IMR-90 (cell line): ENCODE measurements at regions of chr16 and their contacts with region 1.

Region 1: DNA sequence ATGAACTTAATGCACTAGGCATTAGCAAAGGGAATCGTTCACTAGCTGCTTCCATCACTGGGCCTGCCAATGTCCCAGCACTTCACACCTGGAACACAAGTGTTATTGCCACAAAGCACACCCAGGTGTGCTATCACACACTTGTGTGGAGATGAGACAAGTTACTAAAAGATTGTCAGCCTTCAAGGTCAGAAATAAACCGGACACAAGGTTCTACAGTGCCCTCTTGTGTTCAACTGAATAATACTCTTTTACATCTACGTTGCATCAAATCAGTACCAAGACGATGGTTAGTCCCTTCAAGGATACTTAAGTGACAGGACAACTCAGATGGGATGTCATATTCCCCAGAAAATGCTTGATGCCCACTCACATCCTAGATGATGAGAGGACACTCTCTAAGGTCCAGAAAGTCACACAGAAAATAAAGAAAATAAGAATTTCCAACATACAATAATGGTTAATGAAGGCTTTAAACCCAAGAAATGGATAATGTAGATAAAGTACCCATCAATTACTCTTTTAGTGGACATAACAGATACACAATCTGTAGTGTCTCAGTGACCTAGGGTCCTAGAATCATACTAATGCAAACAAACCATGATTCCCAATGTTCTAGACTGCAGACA is 16.4 kb upstream of the GLG1 start:
- DNase-seq: peak; percentile 68
- ATAC-seq: peak; percentile 56
- H3K4me3 ChIP-seq: no peak overlapping the region
- H3K27ac ChIP-seq: no peak overlapping the region
- H3K4me1 ChIP-seq: peaks cover 4% of the 10 kb centered on the region
- H3K27me3 ChIP-seq: no peaks in the 10 kb centered on the region
- CTCF ChIP-seq: peak; percentile 67
- POLR2A ChIP-seq: no peak
- RAD21 ChIP-seq: peak; percentile 78

Region 2: DNA sequence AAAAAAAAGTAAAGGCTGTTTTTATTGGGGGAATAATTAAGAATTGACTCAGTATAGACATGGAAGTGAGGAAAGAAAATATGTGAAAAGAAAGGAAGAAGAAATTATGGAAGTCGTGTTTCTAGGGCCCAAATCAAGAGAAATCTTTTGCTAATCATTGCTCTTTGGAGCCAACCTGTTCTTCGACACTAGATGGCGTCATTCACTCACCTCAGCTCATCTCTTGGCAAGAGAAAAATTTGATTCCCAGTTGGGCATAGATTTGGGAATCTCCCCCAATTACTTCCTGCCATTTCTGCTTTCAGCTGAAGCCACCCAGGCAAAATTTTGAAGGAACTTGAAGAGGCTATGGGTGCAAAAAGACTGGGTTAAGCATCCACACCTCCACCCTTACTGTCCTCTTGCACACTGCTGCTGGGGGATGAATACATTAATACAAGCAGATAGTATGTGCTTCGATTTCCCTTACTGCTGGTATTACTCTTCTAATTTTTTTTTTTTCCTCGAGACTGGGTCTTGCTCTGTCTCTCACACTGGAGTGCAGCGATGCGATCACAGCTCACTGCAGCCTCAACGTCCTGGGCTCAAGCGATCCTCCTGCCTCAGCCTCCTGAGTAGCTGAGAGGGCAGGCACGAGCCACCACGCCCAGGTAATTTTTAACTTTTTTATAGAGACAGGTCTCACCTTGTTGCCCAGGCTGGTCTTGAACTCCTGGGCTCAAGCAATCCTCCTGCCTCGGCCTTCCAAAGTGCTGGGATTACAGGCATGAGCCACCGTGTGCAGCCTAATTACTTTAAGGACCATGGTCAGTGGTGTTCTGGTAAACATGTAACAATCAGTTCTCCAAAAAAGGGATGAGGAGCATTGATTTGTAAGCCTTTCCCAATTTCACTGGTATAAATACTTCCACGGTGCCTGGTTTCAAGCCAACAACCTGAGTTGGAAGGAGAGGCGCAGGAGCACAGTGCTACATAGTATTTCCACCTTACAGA is 313.2 kb before region 1 on chr16:
- CTCF ChIA-PET with region 1: no interaction called
- POLR2A ChIA-PET with region 1: no interaction called
- dilution Hi-C with region 1: no loop called
- in situ Hi-C with region 1: no loop called
- intact Hi-C with region 1: loop called (anchors 5 kb)
- DNase-seq: peak; percentile 56
- ATAC-seq: peak; percentile 66
- H3K4me3 ChIP-seq: no peak overlapping the region
- H3K27ac ChIP-seq: no peak overlapping the region
- H3K4me1 ChIP-seq: no peaks in the 10 kb centered on the region
- H3K27me3 ChIP-seq: no peaks in the 10 kb centered on the region
- CTCF ChIP-seq: peak; percentile 73
- POLR2A ChIP-seq: no peak
- RAD21 ChIP-seq: peak; percentile 74

Region 3: DNA sequence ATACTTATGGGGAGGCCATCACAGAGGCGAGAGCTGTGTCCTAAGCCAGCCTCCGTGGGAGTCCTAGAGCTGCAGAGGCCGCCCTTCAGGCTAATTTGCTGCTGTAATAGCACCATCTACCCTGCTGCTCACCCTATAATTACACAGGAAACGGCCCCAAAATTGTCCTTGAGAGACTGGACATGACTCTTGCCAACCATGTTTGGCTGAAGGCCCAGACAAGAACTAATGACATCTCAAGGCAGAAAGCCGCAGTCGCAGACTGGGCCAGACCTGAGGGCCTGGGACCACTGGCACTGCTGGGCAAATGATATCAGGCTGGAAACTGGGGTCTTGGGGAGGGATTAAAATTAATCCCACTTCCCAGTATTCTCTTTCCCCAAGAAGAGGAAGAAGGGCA is 302.6 kb before region 1 on chr16:
- CTCF ChIA-PET with region 1: no interaction called
- POLR2A ChIA-PET with region 1: no interaction called
- dilution Hi-C with region 1: no loop called
- in situ Hi-C with region 1: loop called (anchors 10 kb)
- intact Hi-C with region 1: no loop called
- DNase-seq: no peak
- ATAC-seq: no peak
- H3K4me3 ChIP-seq: no peak overlapping the region
- H3K27ac ChIP-seq: no peak overlapping the region
- H3K4me1 ChIP-seq: 0 out of 2 replicates have a peak, but pooled peaks cover 1% of the 10 kb centered on the region
- H3K27me3 ChIP-seq: no peaks in the 10 kb centered on the region
- CTCF ChIP-seq: no peak
- POLR2A ChIP-seq: no peak
- RAD21 ChIP-seq: no peak

Region 4: GRCh38 chr16:74480141-74481029 is 142.9 kb before region 1 on chr16:
- CTCF ChIA-PET with region 1: interaction called, 3 read pairs
- POLR2A ChIA-PET with region 1: no interaction called
- dilution Hi-C with region 1: no loop called
- in situ Hi-C with region 1: loop called (anchors 10 kb)
- intact Hi-C with region 1: no loop called
- DNase-seq: no peak
- ATAC-seq: peak; percentile 54; the same call in 1 of the 2 replicates
- H3K4me3 ChIP-seq: no peak overlapping the region
- H3K27ac ChIP-seq: no peak overlapping the region
- H3K4me1 ChIP-seq: no peaks in the 10 kb centered on the region
- H3K27me3 ChIP-seq: no peaks in the 10 kb centered on the region
- CTCF ChIP-seq: no peak
- POLR2A ChIP-seq: no peak
- RAD21 ChIP-seq: no peak

Region 5: DNA sequence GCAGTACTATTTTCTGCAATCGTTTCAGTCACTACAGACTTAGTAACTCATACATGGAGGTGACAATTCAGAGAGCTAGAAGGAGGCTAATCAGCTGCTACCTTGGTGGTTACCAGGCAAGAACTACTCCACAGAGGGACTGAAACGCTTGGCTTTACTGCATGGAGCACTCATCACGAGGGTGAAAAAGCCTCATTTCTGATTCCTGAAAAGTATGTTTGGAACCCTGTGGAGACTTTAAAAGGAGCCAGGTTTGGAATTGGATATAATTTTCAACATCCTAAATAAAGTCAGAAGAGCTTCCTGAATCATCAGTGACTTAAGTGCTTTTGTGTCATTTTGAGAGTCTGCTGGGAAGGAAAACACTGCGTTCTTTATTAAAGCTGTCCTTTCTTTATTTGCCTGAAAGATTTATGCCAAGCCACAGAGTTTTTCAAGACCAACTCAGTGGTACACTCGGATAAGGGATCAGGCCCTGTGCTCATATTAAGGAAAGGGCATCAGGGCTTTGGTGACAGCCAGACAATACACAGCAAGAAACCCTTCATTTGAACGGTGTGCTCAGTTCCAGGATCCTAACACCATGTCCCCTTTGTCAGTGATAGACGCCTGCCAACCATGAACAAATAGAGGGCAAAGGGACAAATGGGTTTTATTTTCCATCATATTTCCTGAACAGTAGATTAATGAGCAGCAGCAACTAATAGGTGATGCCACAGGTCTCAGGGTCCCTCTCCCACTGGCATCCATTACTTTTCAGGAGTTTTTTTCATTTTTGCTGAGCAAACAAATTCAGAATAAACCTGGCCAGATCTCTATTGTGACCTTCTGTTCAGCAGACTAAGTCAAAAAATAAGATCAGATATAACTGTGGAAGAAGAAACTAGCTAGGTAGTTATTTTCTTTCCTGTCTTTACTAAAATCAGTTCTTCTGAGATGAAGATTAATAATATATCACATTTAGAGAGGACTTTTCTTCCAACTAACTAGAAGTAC is 121.5 kb before region 1 on chr16:
- CTCF ChIA-PET with region 1: no interaction called
- POLR2A ChIA-PET with region 1: no interaction called
- dilution Hi-C with region 1: no loop called
- in situ Hi-C with region 1: no loop called
- intact Hi-C with region 1: loop called (anchors 5 kb)
- DNase-seq: no peak
- ATAC-seq: no peak
- H3K4me3 ChIP-seq: no peak overlapping the region
- H3K27ac ChIP-seq: no peak overlapping the region
- H3K4me1 ChIP-seq: no peaks in the 10 kb centered on the region; the same call in 1 of the 2 replicates
- H3K27me3 ChIP-seq: no peaks in the 10 kb centered on the region
- CTCF ChIP-seq: no peak
- POLR2A ChIP-seq: no peak
- RAD21 ChIP-seq: no peak

Region 6: DNA sequence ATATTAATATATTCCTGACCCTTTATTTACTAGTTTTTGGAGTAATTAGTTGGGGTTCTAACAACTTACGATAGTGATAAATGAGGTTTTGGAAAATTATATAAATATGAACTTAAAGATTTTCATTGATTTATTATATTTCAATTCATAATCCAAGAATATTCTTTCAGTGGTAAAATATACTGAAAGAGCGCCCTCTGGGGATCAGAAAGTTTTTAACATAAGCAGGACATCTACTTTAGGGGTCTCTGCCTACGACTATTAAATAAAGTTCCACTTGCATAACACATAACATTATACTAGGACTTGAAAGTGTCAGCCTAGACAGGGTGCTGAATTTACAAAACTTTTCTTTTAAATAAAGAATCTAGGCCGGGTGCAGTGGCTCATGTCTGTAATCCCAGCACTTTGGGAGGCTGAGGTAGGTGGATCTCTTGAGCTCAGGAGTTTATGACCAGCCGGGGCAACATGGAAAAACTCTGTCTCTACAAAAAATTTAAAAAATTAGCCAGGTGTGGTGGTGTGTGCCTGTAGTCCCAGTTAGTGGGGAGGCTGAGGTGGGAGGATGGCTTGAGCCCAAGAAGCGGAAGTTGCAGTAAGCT is 27.7 kb after region 1 on chr16:
- CTCF ChIA-PET with region 1: no interaction called
- POLR2A ChIA-PET with region 1: no interaction called
- dilution Hi-C with region 1: no loop called
- in situ Hi-C with region 1: no loop called
- intact Hi-C with region 1: no loop called
- DNase-seq: no peak
- ATAC-seq: no peak
- H3K4me3 ChIP-seq: no peak overlapping the region
- H3K27ac ChIP-seq: no peak overlapping the region
- H3K4me1 ChIP-seq: peaks cover 4% of the 10 kb centered on the region
- H3K27me3 ChIP-seq: no peaks in the 10 kb centered on the region
- CTCF ChIP-seq: peak; percentile 50
- POLR2A ChIP-seq: no peak
- RAD21 ChIP-seq: no peak

Region 7: DNA sequence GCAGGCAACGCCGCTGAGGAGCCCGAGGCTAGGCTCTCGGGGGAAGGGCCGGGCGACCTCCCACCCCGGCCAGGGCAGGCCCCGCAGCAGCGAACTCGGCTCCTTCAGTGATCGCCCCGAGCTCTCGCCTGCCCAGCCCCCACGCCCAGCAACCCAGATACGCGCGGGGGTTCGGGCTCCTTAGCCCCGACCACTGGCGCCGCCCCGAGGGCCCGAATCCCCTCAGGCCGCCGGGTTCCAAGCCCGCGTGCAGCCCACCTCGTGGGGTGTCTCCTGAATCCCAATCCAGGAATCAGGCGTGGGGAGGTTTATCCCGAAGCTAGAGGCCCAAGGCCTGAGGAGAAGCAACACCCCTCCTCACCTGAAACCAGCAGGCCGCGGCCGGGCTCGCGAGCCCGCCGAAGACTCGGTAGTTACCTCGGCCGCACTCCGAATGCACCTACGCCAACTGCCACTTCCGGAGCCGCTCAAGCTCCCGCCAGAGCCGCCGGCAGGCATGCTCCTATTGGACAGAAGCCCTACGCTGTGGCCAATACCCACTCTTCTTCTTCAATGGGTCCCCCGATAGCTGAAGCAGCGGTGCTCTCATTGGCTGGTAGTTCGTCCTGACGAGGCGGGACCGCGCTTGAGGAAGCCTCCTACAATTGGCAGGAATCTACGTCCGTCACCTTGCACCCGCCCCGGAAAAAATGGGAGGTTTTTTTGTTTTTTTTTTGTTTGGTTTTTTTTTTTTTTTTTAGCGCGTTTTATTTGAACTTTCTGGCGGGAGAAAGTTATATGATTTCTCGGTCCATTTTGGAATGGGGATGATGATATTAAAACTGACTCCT is 43.3 kb after region 1 on chr16 and contains the start of gene RFWD3:
- CTCF ChIA-PET with region 1: no interaction called
- POLR2A ChIA-PET with region 1: no interaction called
- dilution Hi-C with region 1: no loop called
- in situ Hi-C with region 1: no loop called
- intact Hi-C with region 1: no loop called
- DNase-seq: peak; percentile 99
- ATAC-seq: peak; percentile 100
- H3K4me3 ChIP-seq: peak within 1 kb of the TSS; percentile 89
- H3K27ac ChIP-seq: peak within 1 kb of the TSS; percentile 70
- H3K4me1 ChIP-seq: no peaks in the 10 kb centered on the region
- H3K27me3 ChIP-seq: no peaks in the 10 kb centered on the region
- CTCF ChIP-seq: no peak
- POLR2A ChIP-seq: peak; percentile 91
- RAD21 ChIP-seq: no peak
- total RNA-seq, gene RFWD3: 27.6 and 28.3 TPM in 2 replicates